ENCODE measurements at regions of chr22 and their contacts with region 1.

Region 1: DNA sequence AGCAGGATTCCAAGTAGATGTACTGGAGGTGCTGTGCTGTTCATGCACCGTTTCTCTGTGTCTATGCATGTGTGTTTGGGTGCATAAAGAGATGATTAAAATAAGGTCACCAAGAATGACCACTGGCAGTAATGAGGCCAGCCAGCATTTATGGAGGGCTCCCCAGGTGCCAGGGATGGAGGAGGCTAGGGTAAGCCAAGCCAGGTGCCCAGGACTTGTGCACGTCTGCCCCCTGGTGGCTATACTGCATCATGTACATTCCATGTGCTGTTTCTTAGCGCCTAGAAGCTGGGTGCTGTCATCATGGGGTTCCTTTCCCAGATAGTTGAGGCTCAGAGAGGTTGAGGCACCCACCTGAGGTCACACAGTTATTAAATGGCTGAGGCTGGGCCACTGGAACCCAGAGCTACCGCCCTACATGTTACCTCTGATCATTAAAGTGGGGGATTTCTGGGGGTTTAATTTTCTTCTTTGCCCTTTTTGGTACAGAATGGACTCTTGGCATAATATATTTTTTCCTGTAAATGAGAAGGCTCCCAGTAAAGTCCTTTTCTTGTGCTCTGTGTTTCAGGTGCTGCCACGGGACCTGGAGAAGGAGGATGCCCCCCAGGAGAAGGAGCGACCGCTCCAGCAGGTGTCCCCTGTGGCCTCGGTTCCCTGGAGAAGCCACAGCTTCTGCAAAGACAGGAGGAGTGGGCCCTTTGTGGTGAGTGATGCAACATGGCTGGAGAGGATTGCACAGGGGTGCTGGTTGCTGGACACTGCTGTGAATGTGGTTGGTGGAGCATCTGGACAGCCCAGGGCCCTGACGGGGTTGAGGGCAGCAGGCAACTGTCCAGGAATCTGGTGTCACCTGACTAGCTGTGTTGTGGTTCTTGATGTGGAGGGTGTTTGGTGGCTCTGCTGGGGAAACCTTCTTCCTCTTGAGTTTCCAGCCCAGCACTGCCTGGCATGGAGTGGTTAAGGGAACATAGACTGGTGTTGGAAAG is 96.4 kb downstream of the KIAA1671 start:
- DNase-seq: peak; percentile 50 to 76 (median 65)
- H3K4me3 ChIP-seq: no peak overlapping the region
- H3K27ac ChIP-seq: no peak overlapping the region
- H3K4me1 ChIP-seq: peaks cover 0 to 15% (median 11%) of the 10 kb centered on the region in 3 donors
- H3K27me3 ChIP-seq: no peaks in the 10 kb centered on the region
- CTCF ChIP-seq: peak; percentile 92

Region 2: GRCh38 chr22:24948356-24949202 is 100.4 kb before region 1 on chr22:
- intact Hi-C with region 1: loop called (anchors 5 kb)
- DNase-seq: no peak
- H3K4me3 ChIP-seq: no peak overlapping the region
- H3K27ac ChIP-seq: no peak overlapping the region
- H3K4me1 ChIP-seq: peaks cover 0 to 4% (median 0%) of the 10 kb centered on the region in 3 donors
- H3K27me3 ChIP-seq: no peaks in the 10 kb centered on the region
- CTCF ChIP-seq: no peak